ENCODE measurements at regions of chr17 and their contacts with region 1.

Region 1: DNA sequence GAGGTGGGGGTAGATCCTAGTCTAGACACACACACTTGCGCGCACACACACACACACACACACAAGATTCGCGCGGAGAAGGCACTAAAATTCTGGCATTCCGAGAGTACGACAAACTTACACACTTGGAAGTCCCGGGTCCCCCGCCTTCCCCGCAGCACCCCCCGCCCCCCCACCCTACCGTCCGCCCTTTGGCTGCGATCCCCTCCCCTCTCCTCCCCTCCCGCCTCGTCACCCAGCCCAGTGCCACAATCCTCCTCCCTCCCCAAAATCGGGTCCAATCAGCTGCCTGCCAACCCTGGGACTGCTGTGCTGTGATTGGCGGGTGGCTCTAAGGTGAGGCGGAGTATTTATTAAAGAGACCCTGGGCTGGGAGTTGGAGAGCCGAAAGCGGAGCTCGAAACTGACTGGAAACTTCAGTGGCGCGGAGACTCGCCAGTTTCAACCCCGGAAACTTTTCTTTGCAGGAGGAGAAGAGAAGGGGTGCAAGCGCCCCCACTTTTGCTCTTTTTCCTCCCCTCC is at the start of gene SOX9:
- DNase-seq: peak; percentile 98
- ATAC-seq: peak; percentile 90
- H3K4me3 ChIP-seq: peak within 1 kb of the TSS; percentile 86 to 100 (median 99)
- H3K27ac ChIP-seq: peak within 1 kb of the TSS; percentile 79
- H3K4me1 ChIP-seq: peaks cover 45% of the 10 kb centered on the region
- H3K27me3 ChIP-seq: no peaks in the 10 kb centered on the region; a peak in 1 of 5 replicates
- CTCF ChIP-seq: no peak
- EP300 ChIP-seq: no peak
- POLR2A ChIP-seq: peak; percentile 96 to 99
- RAD21 ChIP-seq: no peak; the same call in none of the 2 replicates
- total RNA-seq, gene SOX9: 27.6 and 40.1 TPM in 2 replicates

Region 2: DNA sequence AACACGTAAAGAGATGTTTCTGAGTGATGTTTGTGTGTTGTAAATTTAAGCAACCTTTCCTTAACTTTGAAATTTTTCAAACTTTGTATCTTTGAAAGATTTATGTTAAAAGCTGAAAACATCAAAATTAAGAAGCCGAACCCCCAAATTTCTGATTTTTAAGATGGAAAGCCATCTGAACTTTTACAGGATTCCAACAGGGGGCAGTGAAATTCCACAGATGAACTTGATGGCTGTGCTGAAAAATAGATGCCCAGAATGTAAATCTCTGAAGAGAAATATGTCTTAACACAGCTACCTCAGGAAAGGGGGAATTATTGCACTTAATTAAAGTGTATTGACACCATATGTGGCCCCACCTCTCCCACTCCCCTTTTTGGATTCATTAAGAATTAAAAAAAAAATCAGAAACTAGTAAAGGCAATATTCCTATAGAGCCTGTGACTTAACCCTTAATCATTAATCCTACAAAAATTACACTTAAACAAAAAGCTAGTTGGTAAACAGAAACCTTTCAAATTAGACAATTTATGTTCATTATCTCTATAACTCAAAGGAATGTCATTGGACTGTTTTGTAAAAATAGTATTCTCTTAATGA is 1353.5 kb before region 1 on chr17:
- CTCF ChIA-PET with region 1: no interaction called
- POLR2A ChIA-PET with region 1: no interaction called
- in situ Hi-C with region 1: loop called (anchors 10 kb)
- intact Hi-C with region 1: loop called (anchors 2 kb)
- DNase-seq: peak; percentile 31
- ATAC-seq: no peak
- H3K4me3 ChIP-seq: no peak overlapping the region
- H3K27ac ChIP-seq: no peak overlapping the region
- H3K4me1 ChIP-seq: no peaks in the 10 kb centered on the region
- H3K27me3 ChIP-seq: no peaks in the 10 kb centered on the region
- CTCF ChIP-seq: peak; percentile 61
- EP300 ChIP-seq: no peak
- POLR2A ChIP-seq: no peak
- RAD21 ChIP-seq: 0 out of 2 replicates have a peak, but pooled peaks have one; percentile 24

Region 3: GRCh38 chr17:71959154-71959553 is 161.5 kb before region 1 on chr17:
- CTCF ChIA-PET with region 1: interaction called, 11 read pairs
- POLR2A ChIA-PET with region 1: no interaction called
- in situ Hi-C with region 1: no loop called
- intact Hi-C with region 1: loop called (anchors 2 kb)
- DNase-seq: peak; percentile 23
- ATAC-seq: peak; percentile 57
- H3K4me3 ChIP-seq: no peak overlapping the region
- H3K27ac ChIP-seq: no peak overlapping the region
- H3K4me1 ChIP-seq: no peaks in the 10 kb centered on the region
- H3K27me3 ChIP-seq: peaks cover 0 to 1% of the 10 kb centered on the region in 2 experiments; a peak in 2 of 5 replicates
- CTCF ChIP-seq: peak; percentile 49
- EP300 ChIP-seq: no peak
- POLR2A ChIP-seq: no peak
- RAD21 ChIP-seq: no peak

Region 4: GRCh38 chr17:72171703-72172667 is 51.3 kb after region 1 on chr17:
- CTCF ChIA-PET with region 1: no interaction called
- POLR2A ChIA-PET with region 1: interaction called, 3 read pairs
- in situ Hi-C with region 1: no loop called
- intact Hi-C with region 1: loop called (anchors 2 kb)
- DNase-seq: no peak
- ATAC-seq: no peak
- H3K4me3 ChIP-seq: no peak overlapping the region
- H3K27ac ChIP-seq: no peak overlapping the region
- H3K4me1 ChIP-seq: peaks cover 21% of the 10 kb centered on the region
- H3K27me3 ChIP-seq: peaks cover 0 to 23% of the 10 kb centered on the region in 2 experiments; a peak in 3 of 5 replicates
- CTCF ChIP-seq: no peak
- EP300 ChIP-seq: no peak
- POLR2A ChIP-seq: no peak
- RAD21 ChIP-seq: no peak

Region 5: DNA sequence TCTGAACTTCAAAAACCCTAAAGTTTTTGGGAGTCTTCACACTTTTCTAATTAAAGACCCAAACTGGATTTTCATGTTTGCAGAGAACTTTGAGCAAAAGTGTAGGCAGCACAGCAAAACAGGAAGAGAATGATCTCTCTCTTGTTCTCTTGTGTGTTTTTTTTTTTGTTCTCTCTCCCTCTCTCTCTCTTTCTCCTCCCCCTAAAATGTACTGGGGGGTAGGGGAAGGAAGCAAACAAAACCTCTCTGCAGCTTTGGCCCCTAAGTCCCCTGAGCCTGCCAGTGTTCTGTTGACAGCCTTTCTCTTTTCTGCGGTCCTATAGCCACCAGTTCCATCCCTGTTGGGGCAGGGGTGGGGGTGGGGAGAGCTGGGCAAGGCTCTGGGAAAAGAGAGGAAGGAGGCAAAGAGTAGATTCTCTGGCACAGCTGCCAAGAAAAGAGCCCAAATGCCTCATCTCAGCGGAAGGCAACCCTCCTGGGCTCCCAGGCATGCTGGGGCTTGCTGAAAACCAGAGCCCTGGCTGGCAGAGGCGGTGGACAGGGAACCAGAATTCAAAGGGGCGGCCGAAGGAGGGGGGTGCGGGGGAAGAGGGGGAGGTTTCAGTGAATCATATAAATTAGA is 295.5 kb after region 1 on chr17:
- CTCF ChIA-PET with region 1: no interaction called
- POLR2A ChIA-PET with region 1: interaction called, 71 read pairs
- in situ Hi-C with region 1: no loop called
- intact Hi-C with region 1: no loop called
- DNase-seq: no peak
- ATAC-seq: no peak
- H3K4me3 ChIP-seq: no peak overlapping the region
- H3K27ac ChIP-seq: peak overlapping the region; percentile 89
- H3K4me1 ChIP-seq: peaks cover 89% of the 10 kb centered on the region
- H3K27me3 ChIP-seq: no peaks in the 10 kb centered on the region
- CTCF ChIP-seq: no peak
- EP300 ChIP-seq: no peak; a peak in 1 of 4 replicates
- POLR2A ChIP-seq: no peak
- RAD21 ChIP-seq: no peak

Region 6: GRCh38 chr17:72465191-72466024 is 344.7 kb after region 1 on chr17:
- CTCF ChIA-PET with region 1: no interaction called
- POLR2A ChIA-PET with region 1: interaction called, 27 read pairs
- in situ Hi-C with region 1: no loop called
- intact Hi-C with region 1: no loop called
- DNase-seq: peak; percentile 89
- ATAC-seq: peak; percentile 98
- H3K4me3 ChIP-seq: peak overlapping the region; percentile 7 to 64 (median 43); a peak in 5 of 6 replicates
- H3K27ac ChIP-seq: peak overlapping the region; percentile 70
- H3K4me1 ChIP-seq: peaks cover 98% of the 10 kb centered on the region
- H3K27me3 ChIP-seq: no peaks in the 10 kb centered on the region
- CTCF ChIP-seq: no peak
- EP300 ChIP-seq: peak; percentile 41 to 66; a peak in 2 of 4 replicates
- POLR2A ChIP-seq: peak in 1 of 2 experiments; percentile 48; a peak in 1 of 4 replicates
- RAD21 ChIP-seq: peak; percentile 12; the same call in 1 of the 2 replicates

Measured in HepG2 (cell line).